GM12878 (cell line): ENCODE measurements at regions of chr16 and their contacts with region 1.

Region 1: DNA sequence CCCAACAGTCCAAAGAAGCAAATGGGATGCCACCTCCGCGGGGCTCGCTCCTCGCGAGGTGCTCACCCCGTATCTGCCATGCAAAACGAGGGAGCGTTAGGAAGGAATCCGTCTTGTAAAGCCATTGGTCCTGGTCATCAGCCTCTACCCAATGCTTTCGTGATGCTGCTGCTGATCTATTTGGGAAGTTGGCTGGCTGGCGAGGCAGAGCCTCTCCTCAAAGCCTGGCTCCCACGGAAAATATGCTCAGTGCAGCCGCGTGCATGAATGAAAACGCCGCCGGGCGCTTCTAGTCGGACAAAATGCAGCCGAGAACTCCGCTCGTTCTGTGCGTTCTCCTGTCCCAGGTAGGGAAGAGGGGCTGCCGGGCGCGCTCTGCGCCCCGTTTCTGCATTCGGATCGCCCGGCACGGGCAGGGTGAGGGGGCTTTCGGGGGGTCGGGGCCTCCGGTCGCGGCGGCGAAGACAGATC is at the start of gene CDH13:
- DNase-seq: no peak
- ATAC-seq: no peak
- H3K4me3 ChIP-seq: no peak within 1 kb of the TSS
- H3K27ac ChIP-seq: no peak within 1 kb of the TSS
- H3K4me1 ChIP-seq: no peaks in the 10 kb centered on the region
- H3K27me3 ChIP-seq: peaks cover 11% of the 10 kb centered on the region in 2 experiments
- CTCF ChIP-seq: no peak
- EP300 ChIP-seq: no peak
- POLR2A ChIP-seq: no peak
- RAD21 ChIP-seq: no peak
- polyA plus RNA-seq, gene CDH13: not detected

Region 2: GRCh38 chr16:81928975-81929374 is 697.9 kb before region 1 on chr16:
- CTCF ChIA-PET with region 1: no interaction called
- POLR2A ChIA-PET with region 1: no interaction called
- RAD21 ChIA-PET with region 1: no interaction called
- SMC1A ChIA-PET with region 1: no interaction called
- in situ Hi-C with region 1: no loop called
- intact Hi-C with region 1: no loop called
- DNase-seq: no peak
- ATAC-seq: no peak; the same call in 2 of the 3 replicates
- H3K4me3 ChIP-seq: no peak overlapping the region
- H3K27ac ChIP-seq: no peak overlapping the region
- H3K4me1 ChIP-seq: no peaks in the 10 kb centered on the region
- H3K27me3 ChIP-seq: no peaks in the 10 kb centered on the region
- CTCF ChIP-seq: no peak
- EP300 ChIP-seq: no peak
- POLR2A ChIP-seq: 0 out of 2 replicates have a peak, but pooled peaks have one; percentile 26
- RAD21 ChIP-seq: no peak

Region 3: DNA sequence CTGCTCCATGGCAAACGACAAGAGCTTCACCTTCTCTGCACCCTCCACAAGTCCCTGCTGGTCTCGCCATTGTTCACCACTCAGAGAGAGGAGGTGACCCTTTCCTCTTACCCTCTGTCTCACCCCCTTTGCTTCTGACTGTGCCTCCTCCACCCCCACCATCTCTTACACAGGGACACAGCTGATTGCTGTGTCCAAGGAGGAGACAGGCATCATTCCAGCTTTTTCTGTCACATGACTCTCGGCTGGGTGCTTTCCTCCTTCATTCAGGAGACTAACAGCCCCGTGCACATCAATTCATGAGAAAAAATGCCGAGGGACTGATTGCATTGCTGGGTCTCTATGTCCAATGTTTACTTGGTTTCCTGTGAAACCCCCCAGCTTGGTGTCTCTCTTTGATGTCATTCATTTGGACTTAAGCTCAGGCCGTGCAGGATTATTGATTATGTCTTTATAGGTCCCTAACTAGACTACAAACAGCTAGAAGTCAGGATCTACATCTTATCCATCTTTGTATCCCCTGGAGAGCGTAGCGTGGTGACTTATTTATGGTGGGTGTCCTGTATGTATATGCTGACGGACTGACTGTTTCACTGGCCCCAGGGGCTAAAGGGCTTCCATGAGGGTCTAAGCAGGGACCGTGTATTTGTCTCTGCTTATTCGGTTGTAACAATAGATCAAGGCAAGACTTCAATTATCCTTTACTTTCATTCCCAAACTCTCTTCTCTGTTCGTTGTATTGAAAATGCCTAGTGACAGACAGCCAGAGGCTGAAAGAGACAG is 82.3 kb before region 1 on chr16:
- CTCF ChIA-PET with region 1: no interaction called
- POLR2A ChIA-PET with region 1: no interaction called
- RAD21 ChIA-PET with region 1: no interaction called
- SMC1A ChIA-PET with region 1: no interaction called
- in situ Hi-C with region 1: no loop called
- intact Hi-C with region 1: no loop called
- DNase-seq: no peak
- ATAC-seq: no peak
- H3K4me3 ChIP-seq: no peak overlapping the region
- H3K27ac ChIP-seq: no peak overlapping the region
- H3K4me1 ChIP-seq: no peaks in the 10 kb centered on the region
- H3K27me3 ChIP-seq: no peaks in the 10 kb centered on the region; a peak in 1 of 4 replicates
- CTCF ChIP-seq: no peak
- EP300 ChIP-seq: no peak
- POLR2A ChIP-seq: no peak
- RAD21 ChIP-seq: no peak

Region 4: GRCh38 chr16:82560805-82561325 is 66.0 kb before region 1 on chr16:
- CTCF ChIA-PET with region 1: no interaction called
- POLR2A ChIA-PET with region 1: no interaction called
- RAD21 ChIA-PET with region 1: no interaction called
- SMC1A ChIA-PET with region 1: no interaction called
- in situ Hi-C with region 1: no loop called
- intact Hi-C with region 1: no loop called
- DNase-seq: no peak
- ATAC-seq: no peak
- H3K4me3 ChIP-seq: no peak overlapping the region
- H3K27ac ChIP-seq: no peak overlapping the region
- H3K4me1 ChIP-seq: no peaks in the 10 kb centered on the region
- H3K27me3 ChIP-seq: no peaks in the 10 kb centered on the region
- CTCF ChIP-seq: no peak
- EP300 ChIP-seq: no peak
- POLR2A ChIP-seq: no peak
- RAD21 ChIP-seq: no peak

Region 5: GRCh38 chr16:82671741-82672140 is 44.9 kb after region 1 on chr16:
- CTCF ChIA-PET with region 1: interaction called, 15 read pairs
- POLR2A ChIA-PET with region 1: no interaction called
- RAD21 ChIA-PET with region 1: no interaction called
- SMC1A ChIA-PET with region 1: interaction called, 5 read pairs
- in situ Hi-C with region 1: no loop called
- intact Hi-C with region 1: no loop called
- DNase-seq: no peak
- ATAC-seq: peak; percentile 71
- H3K4me3 ChIP-seq: no peak overlapping the region
- H3K27ac ChIP-seq: no peak overlapping the region
- H3K4me1 ChIP-seq: no peaks in the 10 kb centered on the region
- H3K27me3 ChIP-seq: no peaks in the 10 kb centered on the region; a peak in 1 of 4 replicates
- CTCF ChIP-seq: peak; percentile 23 to 55 (median 45)
- EP300 ChIP-seq: no peak
- POLR2A ChIP-seq: no peak
- RAD21 ChIP-seq: peak; percentile 46; the same call in 1 of the 2 replicates